Motor neuron (in vitro differentiated cells): ENCODE measurements at regions of chr20 and their contacts with region 1.

Region 1: GRCh38 chr20:32091888-32092346 is 17.6 kb upstream of the TM9SF4 start:
- ATAC-seq: peak; percentile 65 to 98 (median 94)
- H3K4me3 ChIP-seq: no peak overlapping the region
- H3K27ac ChIP-seq: peak overlapping the region in 1 of 2 donors; percentile 21
- H3K4me1 ChIP-seq: peaks cover 0 to 9% of the 10 kb centered on the region in 2 donors

Region 2: DNA sequence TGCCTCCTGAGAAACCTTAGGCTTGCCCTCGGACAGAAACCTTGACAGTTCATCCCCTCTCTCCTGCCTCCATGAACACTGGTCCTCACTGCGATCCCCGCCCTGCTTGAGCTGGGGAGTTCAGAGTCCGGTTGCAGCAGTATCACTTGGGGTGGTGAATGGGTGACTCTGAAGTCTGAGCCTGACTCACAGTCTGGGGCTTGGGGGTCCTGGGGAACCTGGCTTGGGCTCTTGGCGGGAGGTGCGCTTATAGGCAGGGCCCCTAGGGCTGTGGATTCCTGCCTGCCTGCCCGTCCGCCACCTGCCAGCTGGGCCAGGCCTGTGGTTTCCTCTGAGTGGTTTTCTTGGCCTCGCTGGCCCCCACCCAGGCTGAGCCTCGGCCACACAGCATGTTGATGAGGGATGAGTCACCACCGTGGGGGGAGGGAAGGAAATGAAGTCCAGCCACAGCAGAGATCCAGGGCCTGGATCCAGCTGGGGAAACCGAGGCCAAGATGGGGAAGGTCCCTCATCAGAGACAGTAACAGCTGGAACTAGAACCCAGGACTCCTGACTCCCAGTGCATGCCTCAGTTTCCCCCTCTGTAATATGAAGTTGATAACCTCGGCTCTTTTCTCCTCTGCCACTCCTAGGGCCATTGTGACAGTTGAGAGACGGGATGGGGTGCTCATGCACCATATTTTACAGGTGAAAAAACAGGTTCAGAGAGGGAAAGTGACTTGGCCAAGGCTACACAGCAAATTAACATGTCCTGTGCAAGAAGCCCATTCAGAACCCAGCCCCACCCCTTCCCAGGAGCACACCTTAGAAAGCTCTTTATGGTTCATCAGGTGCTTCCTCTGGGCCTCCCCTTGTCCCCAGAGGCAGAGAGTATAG is 255.7 kb before region 1 on chr20:
- in situ Hi-C with region 1: loop called in 1 of 9 experiments (anchors 25 kb)
- ATAC-seq: peak; percentile 83 to 91 (median 88)
- H3K4me3 ChIP-seq: no peak overlapping the region
- H3K27ac ChIP-seq: peak overlapping the region in 1 of 2 donors; percentile 10
- H3K4me1 ChIP-seq: peaks cover 8 to 18% of the 10 kb centered on the region in 2 donors